RWPE1 (cell line): ENCODE measurements at regions of chr11 and their contacts with region 1.

Region 1: GRCh38 chr11:125559888-125560287 is 9.4 kb upstream of the EI24 start:
- DNase-seq: no peak
- H3K27ac ChIP-seq: no peak overlapping the region
- CTCF ChIP-seq: no peak

Region 2: GRCh38 chr11:125441648-125442410 is 118.1 kb before region 1 on chr11:
- CTCF ChIA-PET with region 1: no interaction called
- POLR2A ChIA-PET with region 1: no interaction called
- DNase-seq: no peak
- H3K27ac ChIP-seq: no peak overlapping the region
- CTCF ChIP-seq: no peak

Region 3: DNA sequence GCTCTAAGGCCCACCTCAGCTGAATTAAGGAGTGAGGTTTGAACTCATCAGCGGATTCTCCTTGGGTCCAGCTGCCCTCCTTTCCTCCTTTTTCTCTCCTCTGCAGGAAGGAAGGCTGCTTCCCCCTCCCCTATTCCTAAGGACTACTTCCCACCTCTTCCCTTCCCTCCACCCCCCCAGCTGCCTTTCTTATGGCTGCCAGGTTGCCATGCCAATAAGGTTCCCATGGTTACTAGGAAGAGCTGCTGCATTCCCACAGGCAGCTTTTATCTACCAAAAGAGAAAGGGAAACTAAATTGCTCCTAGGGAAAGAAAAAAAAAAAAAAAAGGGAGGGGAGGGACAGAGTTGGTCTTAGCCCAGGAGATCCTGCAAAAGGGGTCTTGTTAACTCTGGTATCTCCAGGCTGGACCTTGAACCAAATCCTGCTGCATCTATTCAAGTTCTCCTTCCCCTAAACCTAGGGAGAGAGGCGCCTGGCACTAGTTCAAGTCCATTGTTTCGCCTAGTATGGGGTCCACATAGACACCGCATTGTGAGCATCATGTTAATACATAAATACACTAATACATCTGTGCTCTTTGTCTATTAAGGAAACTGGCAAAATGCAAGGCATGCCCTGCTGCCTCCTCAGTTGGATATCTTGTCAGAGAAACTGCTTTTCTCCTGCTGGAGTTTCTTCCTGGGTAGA is 42.6 kb before region 1 on chr11:
- CTCF ChIA-PET with region 1: interaction called, 10 read pairs
- POLR2A ChIA-PET with region 1: no interaction called
- DNase-seq: no peak
- H3K27ac ChIP-seq: no peak overlapping the region
- CTCF ChIP-seq: no peak